ENCODE measurements at regions of chr17 and their contacts with region 1.

Region 1: GRCh38 chr17:50754521-50754920 is 12.8 kb downstream of the ANKRD40CL start:
- DNase-seq: no peak
- H3K4me3 ChIP-seq: no peak overlapping the region
- H3K27ac ChIP-seq: no peak overlapping the region
- H3K4me1 ChIP-seq: no peaks in the 10 kb centered on the region
- CTCF ChIP-seq: no peak

Region 2: GRCh38 chr17:50731575-50732460 is 22.7 kb before region 1 on chr17:
- CTCF ChIA-PET with region 1: no interaction called
- POLR2A ChIA-PET with region 1: interaction called, 5 read pairs
- intact Hi-C with region 1: loop called (anchors 2 kb)
- DNase-seq: no peak
- H3K4me3 ChIP-seq: no peak overlapping the region
- H3K27ac ChIP-seq: no peak overlapping the region
- H3K4me1 ChIP-seq: peaks cover 25% of the 10 kb centered on the region
- CTCF ChIP-seq: no peak